Gastrocnemius medialis (tissue), 4 donors: ENCODE measurements at regions of chr19 and their contacts with region 1.

Region 1: GRCh38 chr19:44954824-44955586 is at the start of gene CLPTM1:
- DNase-seq: peak; percentile 95 to 96
- ATAC-seq: peak; percentile 90 to 95
- H3K4me3 ChIP-seq: peak within 1 kb of the TSS; percentile 93 to 99 (median 96)
- H3K27ac ChIP-seq: peak within 1 kb of the TSS; percentile 89 to 95 (median 92)
- H3K4me1 ChIP-seq: peaks cover 44 to 45% of the 10 kb centered on the region in 2 donors
- H3K27me3 ChIP-seq: no peaks in the 10 kb centered on the region
- CTCF ChIP-seq: peak in 2 of 5 experiments; percentile 56 to 69
- POLR2A ChIP-seq: peak; percentile 59 to 63
- total RNA-seq, gene CLPTM1: 61.3 to 116 (median 89.4) TPM

Region 2: GRCh38 chr19:44746946-44747738 is 207.9 kb before region 1 on chr19:
- in situ Hi-C with region 1: no loop called
- intact Hi-C with region 1: loop called (anchors 10 kb)
- DNase-seq: peak; percentile 92 to 97
- ATAC-seq: peak; percentile 86 to 88
- H3K4me3 ChIP-seq: peak overlapping the region; percentile 61 to 87 (median 72)
- H3K27ac ChIP-seq: peak overlapping the region; percentile 91 to 97 (median 95)
- H3K4me1 ChIP-seq: peaks cover 45 to 67% of the 10 kb centered on the region in 2 donors
- H3K27me3 ChIP-seq: no peaks in the 10 kb centered on the region
- CTCF ChIP-seq: no peak
- POLR2A ChIP-seq: peak; percentile 80

Region 3: GRCh38 chr19:44800461-44800860 is 154.5 kb before region 1 on chr19:
- in situ Hi-C with region 1: no loop called
- intact Hi-C with region 1: no loop called
- DNase-seq: peak; percentile 48 to 73
- ATAC-seq: peak; percentile 73 to 88
- H3K4me3 ChIP-seq: no peak overlapping the region
- H3K27ac ChIP-seq: no peak overlapping the region
- H3K4me1 ChIP-seq: peaks cover 9 to 14% of the 10 kb centered on the region in 2 donors
- H3K27me3 ChIP-seq: no peaks in the 10 kb centered on the region
- CTCF ChIP-seq: peak; percentile 86 to 95 (median 89)
- POLR2A ChIP-seq: no peak

Region 4: DNA sequence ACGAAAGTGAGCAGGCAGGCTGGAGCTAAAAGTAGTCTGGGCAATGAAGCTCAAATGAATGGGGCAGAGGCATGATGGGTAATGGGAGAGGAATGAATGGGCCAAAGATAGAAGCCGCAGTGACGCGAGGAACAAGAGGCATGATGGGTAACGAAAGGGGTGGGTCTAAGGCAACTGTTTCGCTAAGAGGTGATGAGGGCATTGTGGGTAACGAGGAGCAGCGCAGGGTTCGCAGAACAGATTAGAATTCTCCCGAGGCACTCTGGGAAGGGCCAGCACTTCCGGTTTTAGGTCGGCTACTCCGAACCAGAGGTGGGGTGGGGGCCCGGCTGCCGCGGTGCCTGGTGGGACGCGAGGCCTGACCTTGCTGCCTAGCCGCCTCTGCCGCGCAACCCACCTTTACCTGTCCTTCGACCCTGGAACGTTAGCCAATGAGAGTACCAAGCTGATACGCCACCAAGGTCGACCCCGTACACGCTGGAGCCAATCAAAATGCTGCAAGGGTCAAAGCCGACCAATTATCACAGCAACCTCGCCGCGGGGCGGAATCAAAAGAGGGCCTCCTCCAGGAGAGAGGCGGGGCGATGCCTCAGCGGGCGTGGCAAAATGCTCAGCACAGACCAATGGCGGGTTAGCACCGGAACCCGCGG is 64.5 kb before region 1 on chr19:
- in situ Hi-C with region 1: loop called in 1 of 4 experiments (anchors 10 kb)
- intact Hi-C with region 1: loop called (anchors 5 kb)
- DNase-seq: peak; percentile 100
- ATAC-seq: peak; percentile 92 to 95
- H3K4me3 ChIP-seq: peak overlapping the region; percentile 67 to 81 (median 74)
- H3K27ac ChIP-seq: peak overlapping the region; percentile 92 to 95 (median 94)
- H3K4me1 ChIP-seq: peaks cover 18 to 23% of the 10 kb centered on the region in 2 donors
- H3K27me3 ChIP-seq: no peaks in the 10 kb centered on the region
- CTCF ChIP-seq: no peak
- POLR2A ChIP-seq: peak; percentile 31 to 43

Region 5: GRCh38 chr19:44903602-44904425 is 51.2 kb before region 1 on chr19:
- in situ Hi-C with region 1: loop called in 3 of 4 experiments (anchors 5 to 10 kb)
- intact Hi-C with region 1: loop called (anchors 1 kb)
- DNase-seq: peak; percentile 25 to 42
- ATAC-seq: peak; percentile 57 to 72
- H3K4me3 ChIP-seq: no peak overlapping the region
- H3K27ac ChIP-seq: no peak overlapping the region
- H3K4me1 ChIP-seq: no peaks in the 10 kb centered on the region
- H3K27me3 ChIP-seq: peaks cover 31 to 38% (median 34%) of the 10 kb centered on the region in 3 donors
- CTCF ChIP-seq: peak; percentile 90 to 100 (median 96)
- POLR2A ChIP-seq: no peak

Region 6: DNA sequence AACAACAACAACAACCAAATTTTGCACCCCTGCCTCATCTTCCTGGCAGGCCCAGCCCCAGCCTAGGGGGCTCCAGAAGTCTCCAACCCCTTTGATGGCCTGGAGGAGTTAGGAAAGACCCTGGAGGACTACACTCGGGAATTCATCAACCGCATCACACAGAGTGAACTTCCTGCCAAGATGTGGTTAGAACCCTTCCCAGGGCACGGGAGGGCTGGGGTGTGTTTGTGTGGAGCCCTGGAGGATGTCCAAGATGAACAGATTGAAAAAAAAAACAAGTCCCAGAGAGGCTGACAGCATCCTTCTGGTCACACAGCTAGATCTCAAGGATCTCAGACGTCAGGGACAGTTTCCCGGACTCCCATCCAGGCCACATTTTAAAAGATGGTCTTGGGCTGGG is 27.3 kb before region 1 on chr19:
- in situ Hi-C with region 1: no loop called
- intact Hi-C with region 1: no loop called
- DNase-seq: no peak
- ATAC-seq: no peak
- H3K4me3 ChIP-seq: no peak overlapping the region
- H3K27ac ChIP-seq: no peak overlapping the region
- H3K4me1 ChIP-seq: peaks cover 0 to 14% of the 10 kb centered on the region in 2 donors
- H3K27me3 ChIP-seq: no peaks in the 10 kb centered on the region
- CTCF ChIP-seq: no peak
- POLR2A ChIP-seq: no peak

Region 7: DNA sequence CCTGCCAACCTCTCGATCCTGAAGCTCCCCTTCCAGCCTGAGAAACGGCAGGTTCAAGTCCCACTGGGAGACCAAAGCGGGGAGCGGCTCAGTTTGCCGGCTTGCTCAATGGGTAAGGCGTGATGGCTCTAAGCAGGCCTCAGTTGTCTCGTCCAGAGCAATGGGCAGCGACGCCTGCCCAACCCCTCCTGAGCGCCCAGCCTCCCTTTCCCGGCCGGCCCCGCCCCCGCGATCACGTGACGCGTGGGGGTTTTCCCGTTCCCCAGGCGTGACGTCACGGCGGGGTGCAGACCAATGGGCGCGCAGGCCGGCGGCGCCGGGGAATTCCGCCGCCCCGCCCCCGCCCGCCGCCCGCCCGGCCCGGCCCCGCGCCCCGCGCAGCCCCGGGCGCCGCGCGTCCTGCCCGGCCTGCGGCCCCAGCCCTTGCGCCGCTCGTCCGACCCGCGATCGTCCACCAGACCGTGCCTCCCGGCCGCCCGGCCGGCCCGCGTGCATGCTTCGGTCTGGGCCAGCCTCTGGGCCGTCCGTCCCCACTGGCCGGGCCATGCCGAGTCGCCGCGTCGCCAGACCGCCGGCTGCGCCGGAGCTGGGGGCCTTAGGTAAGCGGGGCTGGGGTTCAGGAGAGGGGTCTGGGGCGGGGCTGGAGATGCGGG is 46.2 kb after region 1 on chr19 and contains the start of gene RELB:
- in situ Hi-C with region 1: no loop called
- intact Hi-C with region 1: loop called (anchors 2 kb)
- DNase-seq: peak; percentile 88 to 92
- ATAC-seq: peak; percentile 80 to 84
- H3K4me3 ChIP-seq: peak within 1 kb of the TSS; percentile 74 to 95 (median 92)
- H3K27ac ChIP-seq: peak within 1 kb of the TSS; percentile 98 to 100 (median 100)
- H3K4me1 ChIP-seq: peaks cover 0 to 8% of the 10 kb centered on the region in 2 donors
- H3K27me3 ChIP-seq: no peaks in the 10 kb centered on the region
- CTCF ChIP-seq: peak in 1 of 5 experiments; percentile 18
- POLR2A ChIP-seq: no peak
- total RNA-seq, gene RELB: 8.4 to 21.5 (median 12.9) TPM

Region 8: DNA sequence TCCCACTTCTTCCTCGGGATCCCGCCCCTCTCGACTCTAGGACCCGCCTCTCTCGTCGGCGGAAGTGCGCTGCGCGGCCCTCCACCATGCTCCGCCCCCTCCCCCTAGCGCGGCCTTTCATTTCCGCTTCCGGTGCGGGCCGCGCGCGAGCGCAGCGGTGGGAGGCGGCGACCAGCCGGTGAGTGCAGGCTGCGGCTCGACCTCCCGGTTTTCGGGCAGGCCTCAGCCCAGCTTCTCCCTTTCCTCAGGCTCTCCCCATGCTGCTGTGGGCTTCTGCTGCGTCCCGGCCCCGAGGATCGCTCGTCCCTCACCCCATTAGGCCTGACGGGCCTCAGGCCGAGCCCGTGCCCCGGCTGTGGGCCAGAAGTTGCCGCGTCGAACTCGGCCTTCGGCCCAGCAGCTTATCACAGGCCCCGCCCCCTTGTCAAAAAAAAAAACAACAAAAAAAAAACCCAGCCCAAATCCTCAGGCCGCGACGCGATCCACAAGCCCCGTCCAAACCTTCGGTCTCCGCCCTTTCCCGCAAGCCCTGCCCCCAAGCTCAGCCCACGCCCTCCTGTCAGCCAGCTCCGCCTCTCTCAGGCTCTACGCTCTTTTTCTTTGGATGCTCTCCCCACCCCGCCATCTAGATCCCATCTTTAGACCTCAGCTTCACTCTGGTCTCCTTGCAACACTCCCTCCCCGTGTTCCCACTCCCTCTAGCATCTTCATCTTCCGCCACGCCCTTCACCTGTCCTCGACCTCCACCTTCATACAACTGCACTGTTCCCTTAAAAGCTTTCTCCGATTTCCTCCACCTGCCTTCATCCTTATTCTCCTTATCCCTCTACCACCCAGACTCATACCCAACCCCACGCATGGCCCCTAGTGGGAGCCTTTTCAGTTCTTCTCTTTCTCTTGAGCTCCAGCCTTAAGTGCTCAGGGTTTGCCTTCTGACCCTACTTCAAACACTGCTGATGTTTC is 84.2 kb after region 1 on chr19 and contains the start of gene CLASRP:
- in situ Hi-C with region 1: no loop called
- intact Hi-C with region 1: loop called (anchors 2 kb)
- DNase-seq: peak; percentile 80 to 86
- ATAC-seq: peak; percentile 97 to 98
- H3K4me3 ChIP-seq: peak within 1 kb of the TSS; percentile 87 to 97 (median 94)
- H3K27ac ChIP-seq: peak within 1 kb of the TSS; percentile 90 to 98 (median 94)
- H3K4me1 ChIP-seq: peaks cover 25 to 33% of the 10 kb centered on the region in 2 donors
- H3K27me3 ChIP-seq: no peaks in the 10 kb centered on the region
- CTCF ChIP-seq: no peak
- POLR2A ChIP-seq: peak; percentile 94 to 98
- total RNA-seq, gene CLASRP: 28.8 to 121 (median 91.5) TPM